K562 (cell line): ENCODE measurements at regions of chr18 and their contacts with region 1.

Region 1: GRCh38 chr18:80108728-80109675 is at the start of gene ADNP2:
- DNase-seq: peak; percentile 86 to 94 (median 91)
- ATAC-seq: peak; percentile 97
- H3K4me3 ChIP-seq: peak within 1 kb of the TSS; percentile 69
- H3K27ac ChIP-seq: peak within 1 kb of the TSS; percentile 92
- H3K4me1 ChIP-seq: peaks cover 23 to 38% of the 10 kb centered on the region in 2 experiments; a peak in 4 of 5 replicates
- H3K27me3 ChIP-seq: no peaks in the 10 kb centered on the region
- CTCF ChIP-seq: no peak
- EP300 ChIP-seq: no peak
- POLR2A ChIP-seq: peak; percentile 61
- RAD21 ChIP-seq: no peak
- polyA plus RNA-seq, gene ADNP2: 5.8 to 11.5 TPM

Region 2: GRCh38 chr18:80034068-80034851 is 74.7 kb before region 1 on chr18 and contains the start of gene RBFA:
- CTCF ChIA-PET with region 1: no interaction called
- POLR2A ChIA-PET with region 1: no interaction called
- in situ Hi-C with region 1: no loop called
- intact Hi-C with region 1: loop called (anchors 5 kb)
- DNase-seq: peak; percentile 85 to 95 (median 92)
- ATAC-seq: peak; percentile 88
- H3K4me3 ChIP-seq: peak within 1 kb of the TSS; percentile 78
- H3K27ac ChIP-seq: peak within 1 kb of the TSS; percentile 73
- H3K4me1 ChIP-seq: peaks cover 4 to 9% of the 10 kb centered on the region in 2 experiments; a peak in 4 of 5 replicates
- H3K27me3 ChIP-seq: no peaks in the 10 kb centered on the region
- CTCF ChIP-seq: peak; percentile 36 to 61 (median 41)
- EP300 ChIP-seq: no peak
- POLR2A ChIP-seq: peak; percentile 86
- RAD21 ChIP-seq: 0 out of 4 replicates have a peak, but pooled peaks of 1 of the 2 experiments have one; percentile 5
- polyA plus RNA-seq, gene RBFA: 3.4 to 4.8 TPM